Endothelial cell of umbilical vein (primary cell): ENCODE measurements at regions of chr10 and their contacts with region 1.

Region 1: GRCh38 chr10:84264611-84265141 is 19.8 kb downstream of the RGR start:
- DNase-seq: peak; percentile 73
- H3K4me3 ChIP-seq: no peak overlapping the region
- H3K27ac ChIP-seq: no peak overlapping the region
- H3K4me1 ChIP-seq: no peaks in the 10 kb centered on the region
- H3K27me3 ChIP-seq: peaks cover 8 to 11% of the 10 kb centered on the region in 2 experiments
- CTCF ChIP-seq: peak; percentile 89 to 95
- POLR2A ChIP-seq: no peak

Region 2: DNA sequence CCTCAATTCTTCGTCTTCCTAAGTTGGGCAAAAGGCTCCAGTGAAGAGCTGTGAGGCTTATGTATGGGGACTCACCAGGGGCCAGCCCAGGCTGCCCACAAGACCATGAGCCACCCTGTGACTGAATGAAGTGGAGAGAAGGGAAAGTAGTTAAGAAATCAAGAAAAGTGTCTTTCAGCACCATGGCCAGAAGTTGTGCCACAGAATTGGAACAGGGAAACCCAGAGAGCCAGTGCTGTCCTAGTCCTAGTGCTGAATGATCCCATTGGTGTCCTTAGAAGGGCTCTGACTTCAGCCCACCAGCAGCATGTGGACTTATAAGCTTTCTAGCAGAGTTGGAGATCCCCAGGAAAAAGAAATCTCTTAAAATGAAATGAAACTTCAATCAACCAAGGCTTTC is 26.7 kb after region 1 on chr10:
- CTCF ChIA-PET with region 1: interaction called, 20 read pairs
- POLR2A ChIA-PET with region 1: no interaction called
- dilution Hi-C with region 1: no loop called
- intact Hi-C with region 1: loop called (anchors 1 kb)
- DNase-seq: peak; percentile 55
- H3K4me3 ChIP-seq: no peak overlapping the region
- H3K27ac ChIP-seq: no peak overlapping the region
- H3K4me1 ChIP-seq: peaks cover 7% of the 10 kb centered on the region
- H3K27me3 ChIP-seq: peaks cover 8 to 19% of the 10 kb centered on the region in 2 experiments
- CTCF ChIP-seq: no peak
- POLR2A ChIP-seq: no peak

Region 3: GRCh38 chr10:84328418-84329195 is 63.9 kb after region 1 on chr10 and contains the start of gene CCSER2:
- CTCF ChIA-PET with region 1: interaction called, 17 read pairs
- POLR2A ChIA-PET with region 1: no interaction called
- dilution Hi-C with region 1: no loop called
- intact Hi-C with region 1: loop called (anchors 1 kb)
- DNase-seq: peak; percentile 92
- H3K4me3 ChIP-seq: peak within 1 kb of the TSS; percentile 52 to 90 (median 70)
- H3K27ac ChIP-seq: peak within 1 kb of the TSS; percentile 86
- H3K4me1 ChIP-seq: peaks cover 7% of the 10 kb centered on the region
- H3K27me3 ChIP-seq: no peaks in the 10 kb centered on the region
- CTCF ChIP-seq: peak in 1 of 2 donors; percentile 17
- POLR2A ChIP-seq: peak; percentile 74
- total RNA-seq, gene CCSER2: 49.3 and 50.8 TPM in 2 replicates

Region 4: DNA sequence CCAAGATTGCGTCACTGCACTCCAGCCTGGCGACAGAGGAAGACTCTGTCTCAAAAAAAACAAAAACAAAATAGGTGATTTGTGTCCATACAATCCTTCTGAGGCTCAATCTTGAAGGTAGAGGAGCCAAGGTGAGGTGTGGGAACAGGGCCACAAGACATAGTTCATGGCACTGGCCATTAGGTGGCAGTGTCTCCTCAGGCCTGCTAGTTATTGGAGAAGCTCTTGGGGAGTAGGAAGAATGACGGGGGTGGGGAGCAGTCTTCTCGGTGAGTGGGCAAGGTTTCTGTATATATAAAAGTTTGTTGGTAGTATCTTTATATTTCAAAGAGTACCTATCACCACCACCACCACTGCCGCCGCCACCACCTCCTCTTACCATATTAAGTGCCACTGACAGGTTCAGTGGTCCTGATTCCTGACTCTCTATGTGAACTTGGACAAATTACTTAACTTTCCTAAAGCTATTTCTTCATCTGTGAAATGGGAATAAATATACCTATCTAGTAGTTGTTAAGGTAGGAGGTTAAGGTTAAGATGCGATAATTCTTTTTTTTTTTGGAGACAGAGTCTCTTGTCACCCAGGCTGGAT is 87.7 kb after region 1 on chr10:
- CTCF ChIA-PET with region 1: interaction called, 24 read pairs
- POLR2A ChIA-PET with region 1: no interaction called
- dilution Hi-C with region 1: no loop called
- intact Hi-C with region 1: loop called (anchors 1 kb)
- DNase-seq: peak; percentile 63
- H3K4me3 ChIP-seq: no peak overlapping the region
- H3K27ac ChIP-seq: no peak overlapping the region
- H3K4me1 ChIP-seq: peaks cover 7% of the 10 kb centered on the region
- H3K27me3 ChIP-seq: no peaks in the 10 kb centered on the region
- CTCF ChIP-seq: peak; percentile 66 to 78
- POLR2A ChIP-seq: no peak

Region 5: GRCh38 chr10:84375011-84375410 is 110.3 kb after region 1 on chr10:
- CTCF ChIA-PET with region 1: interaction called, 15 read pairs
- POLR2A ChIA-PET with region 1: no interaction called
- dilution Hi-C with region 1: no loop called
- intact Hi-C with region 1: loop called (anchors 1 kb)
- DNase-seq: peak; percentile 81
- H3K4me3 ChIP-seq: no peak overlapping the region
- H3K27ac ChIP-seq: no peak overlapping the region
- H3K4me1 ChIP-seq: no peaks in the 10 kb centered on the region
- H3K27me3 ChIP-seq: no peaks in the 10 kb centered on the region
- CTCF ChIP-seq: peak; percentile 41 to 52
- POLR2A ChIP-seq: no peak

Region 6: GRCh38 chr10:84429926-84430520 is 165.3 kb after region 1 on chr10:
- CTCF ChIA-PET with region 1: interaction called, 16 read pairs
- POLR2A ChIA-PET with region 1: no interaction called
- dilution Hi-C with region 1: no loop called
- intact Hi-C with region 1: loop called (anchors 1 kb)
- DNase-seq: peak; percentile 73
- H3K4me3 ChIP-seq: no peak overlapping the region
- H3K27ac ChIP-seq: no peak overlapping the region
- H3K4me1 ChIP-seq: peaks cover 6% of the 10 kb centered on the region
- H3K27me3 ChIP-seq: no peaks in the 10 kb centered on the region
- CTCF ChIP-seq: peak; percentile 70 to 81
- POLR2A ChIP-seq: no peak

Region 7: GRCh38 chr10:84574102-84574501 is 309.4 kb after region 1 on chr10:
- CTCF ChIA-PET with region 1: no interaction called
- POLR2A ChIA-PET with region 1: no interaction called
- dilution Hi-C with region 1: no loop called
- intact Hi-C with region 1: no loop called
- DNase-seq: no peak
- H3K4me3 ChIP-seq: no peak overlapping the region
- H3K27ac ChIP-seq: no peak overlapping the region
- H3K4me1 ChIP-seq: no peaks in the 10 kb centered on the region
- H3K27me3 ChIP-seq: no peaks in the 10 kb centered on the region
- CTCF ChIP-seq: peak in 1 of 2 donors; percentile 4
- POLR2A ChIP-seq: no peak